IMR-90 (cell line): ENCODE measurements at regions of chr13 and their contacts with region 1.

Region 1: GRCh38 chr13:28138012-28138755 is at the start of gene PAN3:
- DNase-seq: peak; percentile 89
- ATAC-seq: peak; percentile 74
- H3K4me3 ChIP-seq: peak within 1 kb of the TSS; percentile 81
- H3K27ac ChIP-seq: peak within 1 kb of the TSS; percentile 96
- H3K4me1 ChIP-seq: peaks cover 5% of the 10 kb centered on the region
- H3K27me3 ChIP-seq: no peaks in the 10 kb centered on the region
- CTCF ChIP-seq: peak; percentile 21; the same call in 1 of the 2 replicates
- POLR2A ChIP-seq: peak; percentile 77
- RAD21 ChIP-seq: peak; percentile 25; the same call in 1 of the 2 replicates
- total RNA-seq, gene PAN3: 12.8 and 15.1 TPM in 2 replicates

Region 2: DNA sequence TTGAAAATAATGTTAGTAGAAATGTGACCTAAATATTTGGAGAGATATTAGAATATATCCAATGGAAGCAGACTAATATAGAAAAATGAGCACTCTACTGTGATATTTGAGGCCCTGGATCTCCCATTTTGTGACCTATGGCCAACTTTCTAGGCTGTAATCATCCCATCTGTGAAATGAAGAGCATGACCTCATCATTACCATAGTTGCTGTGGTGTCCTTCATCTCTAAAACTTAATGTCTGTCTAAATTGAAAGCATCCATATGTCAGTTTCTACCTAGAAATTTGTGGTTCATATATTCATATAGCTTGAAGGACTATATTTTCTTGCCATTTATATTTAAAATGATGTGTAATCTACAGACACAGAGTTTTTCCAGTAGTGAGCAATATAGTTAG is 41.8 kb after region 1 on chr13:
- CTCF ChIA-PET with region 1: no interaction called
- POLR2A ChIA-PET with region 1: no interaction called
- dilution Hi-C with region 1: no loop called
- in situ Hi-C with region 1: no loop called
- intact Hi-C with region 1: loop called (anchors 5 kb)
- DNase-seq: peak; percentile 2
- ATAC-seq: no peak
- H3K4me3 ChIP-seq: no peak overlapping the region
- H3K27ac ChIP-seq: no peak overlapping the region
- H3K4me1 ChIP-seq: no peaks in the 10 kb centered on the region
- H3K27me3 ChIP-seq: no peaks in the 10 kb centered on the region
- CTCF ChIP-seq: no peak
- POLR2A ChIP-seq: no peak
- RAD21 ChIP-seq: no peak

Region 3: GRCh38 chr13:28324181-28324789 is 186.1 kb after region 1 on chr13:
- CTCF ChIA-PET with region 1: no interaction called
- POLR2A ChIA-PET with region 1: interaction called, 5 read pairs
- dilution Hi-C with region 1: no loop called
- in situ Hi-C with region 1: no loop called
- intact Hi-C with region 1: loop called (anchors 5 kb)
- DNase-seq: peak; percentile 73
- ATAC-seq: peak; percentile 75
- H3K4me3 ChIP-seq: no peak overlapping the region
- H3K27ac ChIP-seq: no peak overlapping the region
- H3K4me1 ChIP-seq: peaks cover 9% of the 10 kb centered on the region
- H3K27me3 ChIP-seq: no peaks in the 10 kb centered on the region
- CTCF ChIP-seq: peak; percentile 84
- POLR2A ChIP-seq: no peak
- RAD21 ChIP-seq: peak; percentile 89

Region 4: GRCh38 chr13:28636674-28637317 is 498.6 kb after region 1 on chr13:
- CTCF ChIA-PET with region 1: no interaction called
- POLR2A ChIA-PET with region 1: interaction called, 3 read pairs
- dilution Hi-C with region 1: no loop called
- in situ Hi-C with region 1: no loop called
- intact Hi-C with region 1: loop called (anchors 1 kb)
- DNase-seq: peak; percentile 89
- ATAC-seq: peak; percentile 93
- H3K4me3 ChIP-seq: no peak overlapping the region
- H3K27ac ChIP-seq: no peak overlapping the region
- H3K4me1 ChIP-seq: peaks cover 2% of the 10 kb centered on the region; the same call in 1 of the 2 replicates
- H3K27me3 ChIP-seq: no peaks in the 10 kb centered on the region
- CTCF ChIP-seq: peak; percentile 93
- POLR2A ChIP-seq: peak; percentile 44; the same call in 1 of the 2 replicates
- RAD21 ChIP-seq: peak; percentile 98

Region 5: GRCh38 chr13:29081036-29081435 is 942.9 kb after region 1 on chr13:
- CTCF ChIA-PET with region 1: no interaction called
- POLR2A ChIA-PET with region 1: no interaction called
- dilution Hi-C with region 1: no loop called
- in situ Hi-C with region 1: no loop called
- intact Hi-C with region 1: no loop called
- DNase-seq: no peak
- ATAC-seq: no peak
- H3K4me3 ChIP-seq: no peak overlapping the region
- H3K27ac ChIP-seq: no peak overlapping the region
- H3K4me1 ChIP-seq: no peaks in the 10 kb centered on the region
- H3K27me3 ChIP-seq: no peaks in the 10 kb centered on the region
- CTCF ChIP-seq: no peak
- POLR2A ChIP-seq: no peak
- RAD21 ChIP-seq: no peak